ENCODE measurements at regions of chr7 and their contacts with region 1.

Region 1: GRCh38 chr7:108525985-108526767 is at the start of gene PNPLA8:
- DNase-seq: peak; percentile 98
- ATAC-seq: peak; percentile 96
- H3K4me3 ChIP-seq: peak within 1 kb of the TSS; percentile 85
- H3K27ac ChIP-seq: peak within 1 kb of the TSS; percentile 93
- H3K4me1 ChIP-seq: peaks cover 7% of the 10 kb centered on the region
- H3K27me3 ChIP-seq: no peaks in the 10 kb centered on the region
- CTCF ChIP-seq: no peak
- EP300 ChIP-seq: no peak; a peak in 2 of 4 replicates
- POLR2A ChIP-seq: peak; percentile 93
- RAD21 ChIP-seq: no peak
- polyA plus RNA-seq, gene PNPLA8: 9.8 to 12.0 TPM

Region 2: DNA sequence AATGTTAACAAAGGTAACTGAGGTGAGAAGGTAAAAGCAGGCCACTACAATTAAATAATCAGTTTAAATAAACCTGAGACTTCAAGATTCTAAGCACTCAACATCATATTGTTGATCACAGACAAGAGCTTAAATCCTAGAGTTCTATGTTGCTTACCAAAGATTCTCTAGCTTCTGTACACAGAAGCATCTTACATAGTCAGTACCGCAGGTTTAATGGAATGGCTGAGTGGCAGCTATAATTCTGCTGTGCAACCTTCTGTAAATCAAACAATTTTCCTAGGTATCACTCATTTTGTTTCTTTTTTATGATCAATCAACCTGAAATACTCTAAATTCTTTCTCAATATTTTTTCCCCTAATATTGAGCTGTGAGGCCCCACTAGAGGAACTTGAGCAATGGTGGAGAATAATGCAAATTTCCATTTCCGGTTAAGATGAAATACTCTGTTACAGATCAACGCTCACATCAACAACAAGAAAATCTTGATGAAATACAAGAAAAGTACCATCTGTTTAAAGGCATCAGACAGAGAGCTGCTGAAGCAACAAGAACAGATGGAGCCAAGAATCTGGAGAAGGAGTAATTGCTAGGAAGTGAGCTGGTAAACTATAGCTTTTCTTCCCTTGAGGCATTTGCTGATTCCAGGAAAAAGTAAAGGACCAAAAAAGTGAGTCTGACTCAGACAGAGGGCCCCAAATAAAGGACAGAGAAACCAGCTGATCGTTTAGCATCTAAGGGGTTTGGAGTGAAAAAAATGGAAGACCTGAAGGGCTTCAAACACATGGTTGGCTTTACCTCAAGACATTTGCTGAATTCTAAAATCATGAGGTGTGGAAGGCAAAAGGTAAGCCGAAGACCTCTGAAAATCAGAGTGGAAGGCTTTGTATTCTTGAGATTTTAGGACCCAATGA is 22.8 kb before region 1 on chr7:
- CTCF ChIA-PET with region 1: interaction called, 4 read pairs
- POLR2A ChIA-PET with region 1: interaction called, 10 read pairs
- RAD21 ChIA-PET with region 1: interaction called, 8 read pairs
- SMC1A ChIA-PET with region 1: interaction called, 6 read pairs
- in situ Hi-C with region 1: no loop called
- intact Hi-C with region 1: no loop called
- DNase-seq: peak; percentile 35
- ATAC-seq: peak; percentile 96
- H3K4me3 ChIP-seq: peak overlapping the region; percentile 19; the same call in 1 of the 2 replicates
- H3K27ac ChIP-seq: peak overlapping the region; percentile 81
- H3K4me1 ChIP-seq: peaks cover 4% of the 10 kb centered on the region; the same call in 1 of the 2 replicates
- H3K27me3 ChIP-seq: no peaks in the 10 kb centered on the region
- CTCF ChIP-seq: no peak
- EP300 ChIP-seq: no peak
- POLR2A ChIP-seq: no peak
- RAD21 ChIP-seq: no peak

Region 3: GRCh38 chr7:108569381-108570145 is 43.4 kb after region 1 on chr7 and contains the starts of genes DNAJB9 and THAP5:
- CTCF ChIA-PET with region 1: interaction called, 10 read pairs
- POLR2A ChIA-PET with region 1: interaction called, 45 read pairs
- RAD21 ChIA-PET with region 1: interaction called, 30 read pairs
- SMC1A ChIA-PET with region 1: interaction called, 18 read pairs
- in situ Hi-C with region 1: loop called (anchors 5 kb)
- intact Hi-C with region 1: loop called (anchors 1 kb)
- DNase-seq: peak; percentile 99
- ATAC-seq: peak; percentile 95
- H3K4me3 ChIP-seq: peak within 1 kb of the TSS; percentile 84
- H3K27ac ChIP-seq: peak within 1 kb of the TSS; percentile 91
- H3K4me1 ChIP-seq: no peaks in the 10 kb centered on the region
- H3K27me3 ChIP-seq: no peaks in the 10 kb centered on the region
- CTCF ChIP-seq: 0 out of 6 replicates have a peak, but pooled peaks of 1 of the 3 experiments have one; percentile 1
- EP300 ChIP-seq: 0 out of 4 replicates have a peak, but pooled peaks of 1 of the 2 experiments have one; percentile 21
- POLR2A ChIP-seq: peak; percentile 99
- RAD21 ChIP-seq: no peak
- polyA plus RNA-seq, gene DNAJB9: 4.5 to 5.0 TPM
- polyA plus RNA-seq, gene THAP5: 16.5 to 22.7 TPM

Region 4: GRCh38 chr7:108660460-108660859 is 134.3 kb after region 1 on chr7:
- CTCF ChIA-PET with region 1: no interaction called
- POLR2A ChIA-PET with region 1: no interaction called
- RAD21 ChIA-PET with region 1: no interaction called
- SMC1A ChIA-PET with region 1: no interaction called
- in situ Hi-C with region 1: no loop called
- intact Hi-C with region 1: no loop called
- DNase-seq: no peak
- ATAC-seq: no peak
- H3K4me3 ChIP-seq: no peak overlapping the region
- H3K27ac ChIP-seq: no peak overlapping the region
- H3K4me1 ChIP-seq: no peaks in the 10 kb centered on the region
- H3K27me3 ChIP-seq: no peaks in the 10 kb centered on the region; a peak in 1 of 4 replicates
- CTCF ChIP-seq: no peak; a peak in 1 of 6 replicates
- EP300 ChIP-seq: no peak
- POLR2A ChIP-seq: no peak
- RAD21 ChIP-seq: peak; percentile 24; the same call in 1 of the 2 replicates

Region 5: DNA sequence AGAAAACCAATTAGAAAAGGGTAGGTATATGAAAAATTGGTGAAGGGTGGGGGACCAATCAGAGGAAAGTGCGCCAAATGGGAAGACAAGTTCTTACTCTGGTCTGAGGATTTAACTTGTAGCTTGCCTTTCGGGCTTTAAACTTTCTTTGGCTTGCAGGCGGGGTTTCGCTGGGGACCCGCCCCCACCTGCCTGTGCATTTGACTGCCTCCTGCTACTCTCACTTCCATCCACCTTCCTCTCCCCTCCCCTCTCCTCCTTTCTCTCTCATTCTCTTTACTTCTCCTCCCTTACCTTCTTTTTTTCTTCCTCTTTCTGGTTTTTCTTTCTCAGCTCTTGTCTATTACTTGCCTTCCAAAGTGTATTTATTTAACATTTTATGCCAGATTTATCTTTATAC is 322.3 kb after region 1 on chr7:
- CTCF ChIA-PET with region 1: no interaction called
- POLR2A ChIA-PET with region 1: no interaction called
- RAD21 ChIA-PET with region 1: no interaction called
- SMC1A ChIA-PET with region 1: no interaction called
- in situ Hi-C with region 1: no loop called
- intact Hi-C with region 1: no loop called
- DNase-seq: no peak
- ATAC-seq: no peak
- H3K4me3 ChIP-seq: no peak overlapping the region
- H3K27ac ChIP-seq: no peak overlapping the region
- H3K4me1 ChIP-seq: no peaks in the 10 kb centered on the region
- H3K27me3 ChIP-seq: no peaks in the 10 kb centered on the region
- CTCF ChIP-seq: no peak
- EP300 ChIP-seq: no peak
- POLR2A ChIP-seq: no peak
- RAD21 ChIP-seq: no peak

Measured in GM12878 (cell line).